Heart right ventricle (tissue), 16 donors: ENCODE measurements at regions of chr1 and their contacts with region 1.

Region 1: GRCh38 chr1:20442920-20443625 is 42.9 kb downstream of the CAMK2N1 start:
- DNase-seq: no peak
- ATAC-seq: no peak
- H3K4me3 ChIP-seq: no peak overlapping the region
- H3K27ac ChIP-seq: no peak overlapping the region
- H3K4me1 ChIP-seq: no peaks in the 10 kb centered on the region
- H3K27me3 ChIP-seq: peaks cover 0 to 7% (median 3%) of the 10 kb centered on the region in 7 donors
- CTCF ChIP-seq: no peak

Region 2: DNA sequence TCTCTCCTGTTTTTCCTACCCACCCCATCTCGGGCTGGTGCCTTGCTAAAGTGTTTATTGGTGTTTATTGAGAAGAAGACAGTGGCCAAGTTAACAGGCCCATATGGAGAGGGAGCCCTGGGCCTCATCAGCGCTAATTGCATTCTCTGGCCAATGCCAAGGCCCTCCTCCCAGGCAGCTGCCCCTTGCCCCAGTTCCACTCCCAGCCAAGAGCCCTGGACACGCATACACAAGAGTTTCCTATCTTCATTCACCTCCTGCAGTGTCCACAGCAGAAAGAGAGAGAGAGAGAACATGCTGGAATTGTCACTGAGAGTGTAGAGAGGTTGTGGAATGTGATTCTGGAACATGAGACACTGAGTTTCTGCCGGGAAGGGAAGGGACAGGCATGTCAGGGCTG is 177.8 kb before region 1 on chr1:
- intact Hi-C with region 1: no loop called
- DNase-seq: peak; percentile 47 to 57
- ATAC-seq: peak; percentile 74 to 98 (median 90)
- H3K4me3 ChIP-seq: no peak overlapping the region
- H3K27ac ChIP-seq: peak overlapping the region in 8 of 10 donors; percentile 26 to 81 (median 36)
- H3K4me1 ChIP-seq: peaks cover 0 to 16% (median 7%) of the 10 kb centered on the region in 9 donors
- H3K27me3 ChIP-seq: peaks cover 0 to 6% (median 0%) of the 10 kb centered on the region in 7 donors
- CTCF ChIP-seq: no peak

Region 3: GRCh38 chr1:20376880-20377494 is 66.1 kb before region 1 on chr1:
- intact Hi-C with region 1: no loop called
- DNase-seq: peak; percentile 16 to 53
- ATAC-seq: peak in 3 of 8 donors; percentile 44 to 64 (median 62)
- H3K4me3 ChIP-seq: no peak overlapping the region
- H3K27ac ChIP-seq: no peak overlapping the region
- H3K4me1 ChIP-seq: peaks cover 0 to 5% (median 0%) of the 10 kb centered on the region in 9 donors
- H3K27me3 ChIP-seq: peaks cover 0 to 85% (median 27%) of the 10 kb centered on the region in 7 donors
- CTCF ChIP-seq: peak; percentile 26 to 84 (median 74)

Region 4: DNA sequence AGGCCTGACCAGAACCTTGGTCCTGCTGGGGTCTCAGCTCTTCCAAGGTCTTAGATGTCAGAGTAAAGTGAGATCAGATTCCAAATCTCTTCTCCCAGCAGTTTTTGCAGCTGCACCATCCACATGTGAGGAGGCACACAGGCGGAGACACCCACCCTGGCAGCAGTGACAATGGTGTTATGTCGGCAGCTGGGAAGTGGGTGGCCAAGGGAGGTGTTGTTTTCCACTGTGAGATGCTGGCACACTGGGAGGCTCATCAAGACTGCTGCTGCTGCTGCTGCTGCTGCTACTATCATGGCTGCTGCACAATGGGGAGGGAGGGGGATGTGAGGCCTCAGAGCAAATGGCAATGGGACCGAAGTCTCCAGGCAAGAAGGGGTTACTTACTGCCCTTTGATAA is 19.3 kb after region 1 on chr1:
- intact Hi-C with region 1: loop called in 1 of 10 experiments (anchors 2 kb)
- DNase-seq: no peak
- ATAC-seq: no peak
- H3K4me3 ChIP-seq: no peak overlapping the region
- H3K27ac ChIP-seq: no peak overlapping the region
- H3K4me1 ChIP-seq: no peaks in the 10 kb centered on the region
- H3K27me3 ChIP-seq: peaks cover 0 to 37% (median 12%) of the 10 kb centered on the region in 7 donors
- CTCF ChIP-seq: no peak